Transverse colon (tissue), 4 donors: ENCODE measurements at regions of chr3 and their contacts with region 1.

Region 1: DNA sequence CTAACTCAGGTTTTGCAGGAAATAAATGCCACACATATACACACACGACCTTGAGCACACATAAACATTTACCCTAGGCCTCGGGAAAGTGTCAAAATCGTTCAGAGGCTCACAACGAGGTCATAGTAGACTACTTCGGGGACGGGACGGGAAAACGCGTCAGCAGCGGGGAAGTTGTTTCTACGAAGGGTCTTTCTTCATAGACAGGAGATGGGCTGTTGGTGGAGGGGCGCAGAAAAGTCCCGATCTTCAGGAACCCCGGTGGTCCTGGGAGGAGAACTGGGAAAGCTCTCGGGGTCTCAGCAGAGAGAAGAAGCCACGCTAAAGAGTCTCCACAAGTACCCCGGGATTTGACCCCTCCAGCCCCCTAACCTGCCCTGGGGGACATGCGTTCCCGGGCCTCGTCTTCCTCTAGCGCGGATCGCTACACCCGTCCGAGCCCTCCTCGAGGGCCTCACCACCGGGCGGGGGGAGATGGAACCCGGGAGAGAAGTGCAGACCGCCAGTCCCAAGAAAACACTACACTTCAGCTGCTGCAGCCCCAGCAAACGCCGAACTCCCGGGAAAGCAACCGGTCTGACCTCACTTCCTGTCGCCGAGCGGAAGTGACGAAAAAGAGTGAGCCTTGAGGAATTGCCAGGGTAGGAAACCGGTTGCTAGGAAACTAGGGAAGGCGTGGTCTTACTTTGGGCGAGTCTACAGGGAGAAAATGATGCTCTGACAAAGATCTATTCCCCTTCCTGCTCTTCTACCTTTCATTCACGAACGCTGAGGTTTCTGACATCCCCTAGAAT is at the start of gene PIK3R4:
- DNase-seq: peak; percentile 96
- H3K4me3 ChIP-seq: peak within 1 kb of the TSS; percentile 66 to 93 (median 88)
- H3K27ac ChIP-seq: peak within 1 kb of the TSS; percentile 83 to 94 (median 91)
- H3K4me1 ChIP-seq: peaks cover 6 to 39% (median 23%) of the 10 kb centered on the region in 4 donors
- H3K27me3 ChIP-seq: no peaks in the 10 kb centered on the region
- CTCF ChIP-seq: no peak
- EP300 ChIP-seq: no peak
- POLR2A ChIP-seq: peak; percentile 74
- total RNA-seq, gene PIK3R4: 8.2 to 33.0 (median 29.3) TPM

Region 2: DNA sequence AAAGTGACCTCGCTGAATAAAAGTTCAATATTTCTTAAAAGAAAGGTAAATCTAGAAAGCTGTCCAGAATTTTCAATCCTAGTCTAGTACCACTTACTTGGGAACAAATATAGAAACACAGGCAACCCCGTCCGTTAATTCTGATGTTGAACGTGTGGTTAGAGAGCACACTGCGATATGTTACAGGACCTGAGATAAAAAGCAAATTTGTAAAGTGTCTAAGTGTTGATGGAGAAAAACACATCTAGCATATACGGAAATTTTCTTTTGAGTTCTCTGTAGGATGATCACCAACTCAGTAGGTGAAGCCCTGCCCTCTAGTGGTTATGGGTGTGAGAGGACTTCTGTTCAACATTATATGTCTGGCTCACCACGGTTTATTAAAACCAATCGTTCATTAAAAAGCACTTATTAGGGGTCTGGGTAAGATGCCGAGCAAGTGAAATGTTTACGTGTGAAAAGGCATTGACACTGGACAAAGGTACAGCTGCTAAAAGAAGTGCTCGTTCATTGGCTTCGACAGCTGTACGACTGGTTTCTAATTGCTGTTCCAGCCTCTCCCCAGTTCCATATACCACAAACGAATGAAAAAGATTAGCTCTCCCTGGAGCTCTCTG is 146.4 kb after region 1 on chr3:
- in situ Hi-C with region 1: loop called in 1 of 4 experiments (anchors 10 kb)
- intact Hi-C with region 1: no loop called
- DNase-seq: peak; percentile 75
- H3K4me3 ChIP-seq: peak overlapping the region; percentile 72 to 97 (median 88)
- H3K27ac ChIP-seq: peak overlapping the region; percentile 95 to 98 (median 97)
- H3K4me1 ChIP-seq: peaks cover 0 to 26% (median 14%) of the 10 kb centered on the region in 4 donors
- H3K27me3 ChIP-seq: no peaks in the 10 kb centered on the region
- CTCF ChIP-seq: peak; percentile 82 to 94 (median 89)
- EP300 ChIP-seq: no peak
- POLR2A ChIP-seq: no peak

Region 3: DNA sequence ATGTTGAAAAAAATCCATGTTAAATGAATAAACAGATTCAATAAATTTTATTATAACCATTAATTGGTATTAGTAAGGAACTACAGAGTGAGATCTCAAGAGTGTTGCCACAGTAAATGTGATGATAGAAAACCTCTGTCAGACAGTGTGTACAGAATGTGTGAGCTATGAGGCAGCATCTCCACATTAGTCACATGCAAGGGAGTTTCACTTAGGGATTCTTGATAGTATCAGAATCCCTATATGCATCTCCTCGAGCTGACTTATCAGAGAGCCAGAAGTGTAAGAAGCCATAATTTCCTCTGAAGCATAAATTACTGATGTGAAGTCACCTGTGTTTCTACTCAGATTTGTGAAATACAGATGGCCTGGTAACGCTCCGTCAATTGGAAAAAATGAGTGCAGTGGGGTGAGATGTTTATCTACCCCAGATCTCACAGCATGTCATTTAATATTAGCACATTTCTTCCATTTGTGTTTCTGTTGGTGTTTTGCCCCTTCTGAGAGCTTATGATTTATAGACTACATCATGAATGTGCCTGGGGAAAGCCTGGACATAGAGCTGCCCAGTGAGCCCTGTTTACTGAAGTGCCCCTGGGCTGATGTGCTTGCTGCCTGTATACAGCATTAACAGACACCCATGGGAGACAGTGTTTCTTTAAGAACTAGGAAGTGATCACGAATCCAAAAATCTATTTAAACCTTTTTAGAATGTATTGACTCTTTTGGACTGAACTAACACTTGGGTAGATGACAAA is 1026.0 kb after region 1 on chr3:
- in situ Hi-C with region 1: no loop called
- intact Hi-C with region 1: no loop called
- DNase-seq: no peak
- H3K4me3 ChIP-seq: no peak overlapping the region
- H3K27ac ChIP-seq: no peak overlapping the region
- H3K4me1 ChIP-seq: no peaks in the 10 kb centered on the region
- H3K27me3 ChIP-seq: no peaks in the 10 kb centered on the region
- CTCF ChIP-seq: no peak
- EP300 ChIP-seq: no peak
- POLR2A ChIP-seq: no peak